Dendritic cell treated with granulocyte-macrophage colony-stimulating factor and Interleukin-4, amounts not matched to agents 40 ng/mL and 50 ng/mL, for 4 days (primary cell): ENCODE measurements at regions of chr3 and their contacts with region 1.

Region 1: DNA sequence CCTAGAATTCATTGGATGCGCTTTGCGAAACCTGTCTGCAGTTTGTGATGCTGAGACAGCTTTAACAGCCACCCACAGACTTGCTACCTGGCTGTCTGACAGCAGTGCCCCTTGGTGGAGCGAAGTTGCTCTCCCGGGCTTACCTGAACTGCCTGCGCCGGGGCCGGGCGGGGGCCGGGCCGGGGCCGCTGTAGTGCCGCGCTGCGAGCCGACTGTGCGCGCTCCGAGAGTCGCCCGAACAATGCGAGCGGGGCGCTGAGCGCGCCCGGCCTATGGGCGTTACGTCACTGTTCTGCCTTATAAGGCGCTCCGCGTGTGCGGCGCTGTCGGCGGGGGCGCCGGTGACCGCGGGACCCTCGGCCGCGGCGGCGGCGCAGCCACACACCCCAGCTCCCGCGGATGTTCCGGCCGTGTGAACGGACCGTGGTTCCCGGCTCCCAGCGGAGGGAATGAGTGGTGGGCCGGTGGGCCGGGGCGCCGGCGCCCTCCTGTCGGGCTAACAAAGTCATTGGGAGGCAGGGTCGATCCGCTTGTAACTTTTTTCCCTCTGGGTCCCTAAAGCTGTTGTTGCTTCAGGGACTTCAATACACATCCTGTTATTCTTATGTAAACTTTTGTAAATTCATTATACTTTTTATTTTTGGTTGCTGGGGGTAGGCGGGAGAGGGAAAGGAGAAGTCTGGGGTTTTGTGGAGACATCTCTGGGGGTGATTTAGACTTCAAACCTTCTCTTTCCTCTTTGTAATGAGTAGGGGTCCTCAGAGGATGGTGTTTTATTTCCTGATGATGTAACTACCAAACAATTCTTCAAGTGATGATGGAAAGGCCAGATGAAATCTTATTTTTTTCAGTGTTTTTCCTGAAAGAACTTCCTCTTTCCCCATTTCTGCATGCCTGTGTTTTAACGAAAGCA is 58.5 kb downstream of the CMSS1 start:
- H3K4me3 Mint-ChIP-seq: peak overlapping the region; percentile 74
- H3K27ac Mint-ChIP-seq: peak overlapping the region; percentile 92
- H3K4me1 Mint-ChIP-seq: peaks cover 36% of the 10 kb centered on the region
- H3K27me3 Mint-ChIP-seq: no peaks in the 10 kb centered on the region

Region 2: GRCh38 chr3:99911433-99911832 is 35.2 kb after region 1 on chr3:
- intact Hi-C with region 1: no loop called
- H3K4me3 Mint-ChIP-seq: no peak overlapping the region
- H3K27ac Mint-ChIP-seq: no peak overlapping the region
- H3K4me1 Mint-ChIP-seq: peaks cover 11% of the 10 kb centered on the region
- H3K27me3 Mint-ChIP-seq: no peaks in the 10 kb centered on the region

Region 3: GRCh38 chr3:100047455-100048141 is 171.4 kb after region 1 on chr3:
- intact Hi-C with region 1: loop called (anchors 5 kb)
- H3K4me3 Mint-ChIP-seq: peak overlapping the region; percentile 28
- H3K27ac Mint-ChIP-seq: peak overlapping the region; percentile 72
- H3K4me1 Mint-ChIP-seq: peaks cover 51% of the 10 kb centered on the region
- H3K27me3 Mint-ChIP-seq: no peaks in the 10 kb centered on the region